ENCODE measurements at regions of chr16 and their contacts with region 1.

Region 1: DNA sequence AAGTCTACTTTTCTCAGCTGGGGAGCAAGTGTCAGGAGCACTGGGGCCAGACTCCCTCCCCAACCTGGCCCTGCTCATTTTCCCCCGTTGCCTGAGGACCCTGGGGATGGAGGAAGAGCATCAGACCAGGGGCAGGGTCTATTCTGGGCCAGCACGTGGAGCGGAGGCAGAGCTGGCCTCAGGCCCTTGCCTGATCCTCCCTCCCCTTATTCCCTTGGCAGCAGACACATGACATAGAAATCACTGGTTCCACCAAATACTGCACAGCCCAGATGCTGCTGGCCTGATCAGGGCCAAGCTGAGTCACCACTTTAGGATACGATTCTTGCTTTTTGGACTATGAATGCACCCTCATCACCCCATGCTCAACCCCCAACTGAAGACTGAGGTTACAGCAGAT is 15.8 kb upstream of the AGRP start:
- DNase-seq: no peak
- ATAC-seq: no peak
- H3K4me3 ChIP-seq: no peak overlapping the region
- H3K4me3 Mint-ChIP-seq: no peak overlapping the region
- H3K27ac ChIP-seq: no peak overlapping the region
- H3K27ac Mint-ChIP-seq: peak overlapping the region; percentile 65 to 82
- H3K4me1 ChIP-seq: peaks cover 18% of the 10 kb centered on the region
- H3K4me1 Mint-ChIP-seq: peaks cover 28 to 50% of the 10 kb centered on the region in 2 donors
- H3K27me3 ChIP-seq: no peaks in the 10 kb centered on the region
- H3K27me3 Mint-ChIP-seq: no peaks in the 10 kb centered on the region
- CTCF ChIP-seq: no peak

Region 2: DNA sequence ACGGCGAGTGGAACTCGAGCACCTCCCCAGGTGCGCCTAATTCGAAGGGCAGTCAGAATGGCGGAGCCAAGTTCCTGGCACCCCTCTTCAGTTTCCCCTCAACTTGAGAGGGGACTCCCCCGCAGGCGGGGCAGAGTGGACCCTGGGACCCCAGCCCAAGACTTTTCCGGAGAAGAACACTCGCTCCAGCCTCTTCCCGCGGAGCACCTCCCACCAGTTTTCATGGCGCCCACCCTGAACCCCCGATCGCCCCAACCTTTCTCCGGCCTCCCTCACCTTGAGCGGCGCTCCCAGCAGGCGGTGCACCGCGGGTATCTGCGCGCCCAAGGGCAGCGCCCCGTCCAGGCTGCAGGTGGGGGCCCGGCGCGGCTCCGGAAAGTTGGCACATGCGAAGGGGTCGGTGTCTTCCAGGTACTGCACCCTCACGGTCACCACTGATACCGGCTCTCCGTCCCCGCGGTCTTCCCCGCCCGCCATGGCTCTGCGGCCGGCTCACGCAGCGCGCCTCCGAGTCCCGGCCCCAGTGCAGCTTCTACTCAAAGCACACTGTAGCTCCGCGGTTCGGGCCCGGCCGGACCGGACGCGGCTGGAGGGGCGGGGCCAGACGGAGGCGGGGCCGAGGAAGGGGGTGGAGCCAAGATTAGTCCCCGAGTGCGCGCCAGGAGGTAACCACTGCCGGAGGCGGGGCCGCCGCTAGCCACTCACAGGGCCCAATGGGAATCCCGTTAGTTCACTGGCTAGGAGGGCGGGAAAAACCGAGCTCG is 252.0 kb before region 1 on chr16 and contains the start of gene FHOD1:
- intact Hi-C with region 1: no loop called
- DNase-seq: peak; percentile 95 to 99
- ATAC-seq: peak; percentile 73 to 91 (median 82)
- H3K4me3 ChIP-seq: peak within 1 kb of the TSS; percentile 65
- H3K4me3 Mint-ChIP-seq: peak within 1 kb of the TSS; percentile 96
- H3K27ac ChIP-seq: peak within 1 kb of the TSS; percentile 60
- H3K27ac Mint-ChIP-seq: peak within 1 kb of the TSS; percentile 92 to 98
- H3K4me1 ChIP-seq: peaks cover 57% of the 10 kb centered on the region
- H3K4me1 Mint-ChIP-seq: peaks cover 33 to 58% of the 10 kb centered on the region in 2 donors
- H3K27me3 ChIP-seq: peaks cover 17% of the 10 kb centered on the region
- H3K27me3 Mint-ChIP-seq: peaks cover 18 to 31% of the 10 kb centered on the region in 2 donors
- CTCF ChIP-seq: no peak
- total RNA-seq, gene FHOD1: 79.3 to 96.8 (median 89.2) TPM

Region 3: GRCh38 chr16:67399181-67399733 is 99.8 kb before region 1 on chr16:
- intact Hi-C with region 1: no loop called
- DNase-seq: peak; percentile 39 to 64
- ATAC-seq: peak in 2 of 3 donors; percentile 81 to 82
- H3K4me3 ChIP-seq: no peak overlapping the region
- H3K4me3 Mint-ChIP-seq: no peak overlapping the region
- H3K27ac ChIP-seq: no peak overlapping the region
- H3K27ac Mint-ChIP-seq: no peak overlapping the region
- H3K4me1 ChIP-seq: peaks cover 20% of the 10 kb centered on the region
- H3K4me1 Mint-ChIP-seq: peaks cover 1 to 11% of the 10 kb centered on the region in 2 donors
- H3K27me3 ChIP-seq: peaks cover 13% of the 10 kb centered on the region
- H3K27me3 Mint-ChIP-seq: peaks cover 0 to 15% of the 10 kb centered on the region in 2 donors
- CTCF ChIP-seq: peak; percentile 61

Region 4: DNA sequence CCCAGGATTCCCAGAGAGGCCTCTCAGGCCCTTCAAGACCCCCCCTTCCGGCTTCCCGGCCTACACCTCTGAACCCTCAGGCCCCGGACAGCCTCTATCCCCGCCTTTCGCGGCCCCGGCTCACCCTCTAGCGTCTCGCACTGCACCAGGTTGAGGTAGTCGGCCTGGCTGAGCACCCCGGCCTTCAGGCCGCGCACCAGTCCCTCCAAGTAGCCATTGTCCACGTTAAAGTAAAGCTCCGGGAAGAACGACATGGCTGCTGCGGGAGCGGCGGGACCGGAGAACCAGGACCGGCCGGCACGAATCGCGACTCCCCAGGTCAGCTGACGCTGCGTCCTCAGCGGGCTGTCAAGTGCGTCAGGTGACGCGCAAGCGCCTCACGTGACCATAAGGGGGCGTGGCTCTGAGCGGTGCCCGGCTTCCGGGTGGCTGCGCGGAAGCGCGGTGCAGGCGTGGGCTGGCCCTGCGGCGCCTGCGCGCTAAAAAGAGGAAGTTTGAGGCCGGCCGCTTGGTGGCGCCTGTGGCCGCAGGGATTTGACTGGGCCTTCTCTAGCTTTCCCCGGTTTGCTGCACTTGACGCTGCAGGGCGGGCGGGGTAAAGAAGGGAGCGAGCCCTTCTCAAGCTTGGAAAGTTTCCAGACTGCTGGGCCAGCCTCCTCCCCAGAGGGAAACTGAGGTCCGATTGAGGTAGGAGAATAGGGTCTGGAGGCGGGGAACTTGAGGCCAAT is 18.1 kb before region 1 on chr16 and contains the start of gene ATP6V0D1:
- intact Hi-C with region 1: loop called (anchors 1 kb)
- DNase-seq: peak; percentile 100
- ATAC-seq: peak; percentile 81 to 97 (median 91)
- H3K4me3 ChIP-seq: peak within 1 kb of the TSS; percentile 87
- H3K4me3 Mint-ChIP-seq: peak within 1 kb of the TSS; percentile 100
- H3K27ac ChIP-seq: peak within 1 kb of the TSS; percentile 96
- H3K27ac Mint-ChIP-seq: peak within 1 kb of the TSS; percentile 100
- H3K4me1 ChIP-seq: peaks cover 42% of the 10 kb centered on the region
- H3K4me1 Mint-ChIP-seq: peaks cover 37 to 55% of the 10 kb centered on the region in 2 donors
- H3K27me3 ChIP-seq: no peaks in the 10 kb centered on the region
- H3K27me3 Mint-ChIP-seq: no peaks in the 10 kb centered on the region
- CTCF ChIP-seq: peak; percentile 80
- total RNA-seq, gene ATP6V0D1: 76.0 to 84.9 (median 83.3) TPM

Region 5: DNA sequence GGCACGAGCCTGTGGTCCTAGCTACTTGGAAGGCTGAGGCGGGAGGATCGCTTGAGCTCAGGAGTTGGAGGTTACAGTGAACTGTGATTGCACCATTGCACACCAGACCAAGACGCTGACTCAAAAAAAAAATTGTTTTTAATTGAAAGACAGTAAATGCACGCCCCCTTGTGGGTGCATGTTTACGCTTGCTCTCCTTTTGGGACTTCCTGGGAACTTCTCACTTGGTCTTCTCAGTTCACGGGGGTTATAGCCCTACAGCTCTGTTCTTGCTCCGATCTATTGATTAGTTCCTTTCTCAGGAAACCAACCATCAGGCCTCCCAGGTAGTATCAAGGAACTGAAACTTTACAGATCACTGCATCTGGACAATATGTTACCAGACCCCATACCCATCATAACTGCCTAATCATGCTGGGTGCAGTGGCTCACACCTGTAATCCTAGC is 15.3 kb after region 1 on chr16:
- intact Hi-C with region 1: loop called (anchors 1 kb)
- DNase-seq: peak; percentile 74 to 93
- ATAC-seq: peak; percentile 89 to 97 (median 92)
- H3K4me3 ChIP-seq: no peak overlapping the region
- H3K4me3 Mint-ChIP-seq: no peak overlapping the region
- H3K27ac ChIP-seq: no peak overlapping the region
- H3K27ac Mint-ChIP-seq: peak overlapping the region; percentile 57 to 82
- H3K4me1 ChIP-seq: peaks cover 35% of the 10 kb centered on the region
- H3K4me1 Mint-ChIP-seq: peaks cover 15 to 28% of the 10 kb centered on the region in 2 donors
- H3K27me3 ChIP-seq: no peaks in the 10 kb centered on the region
- H3K27me3 Mint-ChIP-seq: no peaks in the 10 kb centered on the region
- CTCF ChIP-seq: peak; percentile 74

Measured in natural killer cell (primary cell).